HEK293 (cell line): ENCODE measurements at regions of chr1 and their contacts with region 1.

Region 1: DNA sequence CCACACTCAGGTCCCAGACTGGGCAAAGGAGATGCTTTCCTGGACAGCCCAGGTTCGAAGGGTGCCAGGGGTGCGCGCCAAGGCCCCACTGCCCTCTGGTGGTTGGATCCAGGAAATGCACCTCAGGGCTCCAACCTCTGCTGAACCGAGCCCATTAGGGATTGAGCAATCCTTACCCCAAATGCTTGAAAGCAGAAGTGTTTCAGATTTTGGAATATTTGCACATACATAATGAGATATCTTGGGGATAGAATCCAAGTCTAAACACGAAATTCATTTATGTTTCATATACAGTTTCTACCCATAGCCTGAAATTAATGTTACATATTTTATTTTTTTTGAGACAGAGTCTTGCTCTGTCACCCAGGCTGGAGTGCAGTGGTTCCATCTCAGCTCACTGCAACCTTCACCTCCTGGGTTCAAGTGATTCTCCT is 57.4 kb downstream of the SLC9A1 start:
- H3K4me3 ChIP-seq: no peak overlapping the region
- H3K27ac ChIP-seq: no peak overlapping the region
- H3K4me1 ChIP-seq: peaks cover 8% of the 10 kb centered on the region
- CTCF ChIP-seq: peak; percentile 83

Region 2: GRCh38 chr1:26965640-26966039 is 131.9 kb before region 1 on chr1:
- CTCF ChIA-PET with region 1: interaction called, 18 read pairs
- POLR2A ChIA-PET with region 1: interaction called, 3 read pairs
- H3K4me3 ChIP-seq: no peak overlapping the region
- H3K27ac ChIP-seq: no peak overlapping the region
- H3K4me1 ChIP-seq: no peaks in the 10 kb centered on the region
- CTCF ChIP-seq: no peak

Region 3: DNA sequence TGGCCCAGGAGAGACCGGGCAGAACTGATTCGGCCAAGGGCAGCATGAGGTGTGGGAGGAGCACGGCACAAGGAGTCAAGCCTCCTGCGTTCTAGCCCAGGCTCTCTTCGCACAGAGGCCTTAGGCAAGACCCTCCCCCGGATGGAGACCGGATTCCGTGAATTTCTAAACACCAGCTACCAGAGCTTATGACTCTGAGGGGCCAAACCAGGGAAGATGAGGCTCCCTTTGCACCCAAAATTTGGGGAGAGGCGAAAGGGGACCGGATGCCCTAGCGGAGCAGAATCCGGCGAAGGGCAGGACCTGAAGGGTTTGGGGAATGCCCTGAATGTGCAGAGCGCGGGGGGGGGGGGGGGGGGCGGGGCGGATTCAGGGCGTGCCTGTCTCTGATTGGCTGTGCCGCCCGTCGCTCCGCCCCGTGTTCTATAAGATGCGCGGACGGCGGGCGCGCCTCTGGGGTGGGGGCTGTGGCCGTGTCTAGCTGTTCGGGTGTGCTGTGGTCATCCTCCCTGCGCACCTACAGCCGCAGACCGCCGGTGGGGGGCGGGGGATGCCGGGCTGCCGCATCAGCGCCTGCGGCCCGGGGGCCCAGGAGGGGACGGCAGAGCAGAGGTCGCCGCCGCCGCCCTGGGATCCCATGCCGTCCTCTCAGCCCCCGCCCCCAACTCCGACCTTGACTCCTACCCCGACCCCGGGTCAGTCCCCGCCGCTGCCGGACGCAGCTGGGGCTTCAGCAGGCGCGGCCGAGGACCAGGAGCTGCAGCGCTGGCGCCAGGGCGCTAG is 104.1 kb before region 1 on chr1 and contains the start of gene TRNP1:
- CTCF ChIA-PET with region 1: interaction called, 116 read pairs
- POLR2A ChIA-PET with region 1: no interaction called
- H3K4me3 ChIP-seq: peak within 1 kb of the TSS; percentile 57
- H3K27ac ChIP-seq: peak within 1 kb of the TSS; percentile 44; the same call in 1 of the 2 replicates
- H3K4me1 ChIP-seq: no peaks in the 10 kb centered on the region; the same call in 1 of the 2 replicates
- CTCF ChIP-seq: peak; percentile 42; the same call in 1 of the 2 replicates

Region 4: GRCh38 chr1:27038020-27038419 is 59.5 kb before region 1 on chr1:
- CTCF ChIA-PET with region 1: interaction called, 329 read pairs
- POLR2A ChIA-PET with region 1: no interaction called
- H3K4me3 ChIP-seq: no peak overlapping the region
- H3K27ac ChIP-seq: no peak overlapping the region
- H3K4me1 ChIP-seq: no peaks in the 10 kb centered on the region
- CTCF ChIP-seq: no peak

Region 5: DNA sequence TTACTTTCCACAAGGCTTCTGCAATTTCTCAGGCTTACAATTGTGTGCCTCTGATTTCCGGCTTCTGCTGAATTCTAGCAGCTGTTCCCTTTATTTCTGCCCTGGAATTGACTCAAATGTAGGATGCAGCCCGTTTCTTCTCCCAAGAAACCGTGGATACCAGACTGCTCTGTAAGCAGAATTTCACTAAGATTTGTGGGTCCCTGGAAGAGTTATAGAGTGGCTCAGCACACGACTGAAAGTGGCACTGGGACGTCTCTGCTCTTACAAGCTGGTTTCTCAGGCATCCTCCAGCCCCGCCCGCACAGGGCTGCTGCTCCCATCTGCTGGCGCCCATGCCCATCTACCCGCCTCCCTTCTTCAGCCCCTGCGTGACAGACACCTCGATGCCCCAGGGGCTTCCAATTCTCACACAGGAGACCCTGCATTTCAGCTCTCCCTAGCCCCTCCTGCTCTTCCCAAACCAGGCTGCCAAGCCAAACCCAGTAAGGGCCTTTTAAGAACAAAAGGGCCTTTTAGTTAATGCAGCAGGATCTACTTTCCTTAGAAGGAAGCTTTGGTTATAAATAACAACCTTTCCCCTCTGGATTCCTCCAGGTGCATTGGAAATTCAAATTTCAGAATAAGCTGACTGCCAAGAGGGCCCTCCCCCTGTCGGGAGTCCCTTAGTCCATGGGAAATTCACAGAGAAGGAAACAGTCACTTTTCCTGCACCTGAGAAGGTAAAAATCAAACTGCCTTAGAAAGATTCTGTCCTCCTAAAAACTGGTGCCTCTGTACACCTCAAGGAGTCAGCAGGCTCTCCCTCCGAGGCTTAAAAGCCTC is 39.5 kb before region 1 on chr1:
- CTCF ChIA-PET with region 1: interaction called, 37 read pairs
- POLR2A ChIA-PET with region 1: interaction called, 4 read pairs
- H3K4me3 ChIP-seq: no peak overlapping the region
- H3K27ac ChIP-seq: no peak overlapping the region
- H3K4me1 ChIP-seq: no peaks in the 10 kb centered on the region
- CTCF ChIP-seq: no peak

Region 6: GRCh38 chr1:27077968-27078367 is 19.5 kb before region 1 on chr1:
- CTCF ChIA-PET with region 1: interaction called, 11 read pairs
- POLR2A ChIA-PET with region 1: no interaction called
- H3K4me3 ChIP-seq: no peak overlapping the region
- H3K27ac ChIP-seq: no peak overlapping the region
- H3K4me1 ChIP-seq: no peaks in the 10 kb centered on the region
- CTCF ChIP-seq: no peak

Region 7: GRCh38 chr1:27392096-27392777 is 294.7 kb after region 1 on chr1 and contains the start of gene GPR3:
- CTCF ChIA-PET with region 1: interaction called, 13 read pairs
- POLR2A ChIA-PET with region 1: no interaction called
- H3K4me3 ChIP-seq: peak within 1 kb of the TSS; percentile 45
- H3K27ac ChIP-seq: no peak within 1 kb of the TSS
- H3K4me1 ChIP-seq: no peaks in the 10 kb centered on the region
- CTCF ChIP-seq: peak; percentile 83